ENCODE measurements at regions of chr22 and their contacts with region 1.

Region 1: GRCh38 chr22:23240639-23241389 is 60.5 kb downstream of the BCR start:
- DNase-seq: peak; percentile 72
- H3K4me3 Mint-ChIP-seq: no peak overlapping the region
- H3K27ac Mint-ChIP-seq: peak overlapping the region; percentile 72
- H3K4me1 Mint-ChIP-seq: peaks cover 96% of the 10 kb centered on the region
- H3K27me3 Mint-ChIP-seq: no peaks in the 10 kb centered on the region

Region 2: DNA sequence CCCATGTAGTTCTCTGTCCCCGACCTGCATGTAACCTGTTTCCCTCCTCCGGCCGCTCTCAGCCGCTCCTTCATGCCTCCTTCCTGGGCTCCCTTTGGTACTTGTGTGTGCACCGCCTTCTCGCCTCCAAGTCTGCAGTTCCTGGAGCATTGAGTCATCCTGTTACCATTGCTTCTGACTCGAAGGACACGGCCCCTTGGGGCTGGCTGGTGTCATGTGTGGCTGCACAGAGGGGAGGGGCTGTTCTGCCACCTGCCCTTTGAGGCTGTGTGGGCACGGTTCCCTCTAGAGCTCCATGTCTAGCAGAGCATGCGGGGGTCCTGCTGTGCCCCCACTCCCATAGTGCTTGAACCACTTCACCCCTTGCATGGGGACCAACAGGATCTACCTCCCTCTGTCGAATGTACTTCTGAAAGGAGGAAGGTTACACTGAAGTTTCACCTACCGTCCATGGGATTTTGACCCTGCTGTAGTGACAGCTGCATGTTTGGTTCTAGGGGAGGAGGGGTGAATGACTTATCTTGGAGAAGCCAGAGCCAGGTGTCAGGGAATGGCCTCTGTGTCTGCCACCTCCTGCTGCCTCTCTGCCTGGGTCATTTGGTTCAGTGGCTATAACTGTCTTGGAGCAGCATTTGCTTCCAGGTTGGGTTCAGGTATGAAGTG is 20.9 kb before region 1 on chr22:
- CTCF ChIA-PET with region 1: interaction called, 4 read pairs
- POLR2A ChIA-PET with region 1: interaction called, 11 read pairs
- intact Hi-C with region 1: loop called (anchors 1 kb)
- DNase-seq: peak; percentile 87
- H3K4me3 Mint-ChIP-seq: peak overlapping the region; percentile 61
- H3K27ac Mint-ChIP-seq: peak overlapping the region; percentile 76
- H3K4me1 Mint-ChIP-seq: peaks cover 94% of the 10 kb centered on the region
- H3K27me3 Mint-ChIP-seq: no peaks in the 10 kb centered on the region

Region 3: GRCh38 chr22:23281406-23282088 is 40.7 kb after region 1 on chr22:
- CTCF ChIA-PET with region 1: interaction called, 11 read pairs
- POLR2A ChIA-PET with region 1: interaction called, 6 read pairs
- intact Hi-C with region 1: loop called (anchors 5 kb)
- DNase-seq: peak; percentile 87
- H3K4me3 Mint-ChIP-seq: no peak overlapping the region
- H3K27ac Mint-ChIP-seq: no peak overlapping the region
- H3K4me1 Mint-ChIP-seq: peaks cover 35% of the 10 kb centered on the region
- H3K27me3 Mint-ChIP-seq: no peaks in the 10 kb centered on the region

Region 4: GRCh38 chr22:23289851-23290724 is 49.3 kb after region 1 on chr22:
- CTCF ChIA-PET with region 1: interaction called, 11 read pairs
- POLR2A ChIA-PET with region 1: no interaction called
- intact Hi-C with region 1: no loop called
- DNase-seq: peak; percentile 70
- H3K4me3 Mint-ChIP-seq: no peak overlapping the region
- H3K27ac Mint-ChIP-seq: no peak overlapping the region
- H3K4me1 Mint-ChIP-seq: no peaks in the 10 kb centered on the region
- H3K27me3 Mint-ChIP-seq: no peaks in the 10 kb centered on the region